PC-9 (cell line): ENCODE measurements at regions of chr15 and their contacts with region 1.

Region 1: DNA sequence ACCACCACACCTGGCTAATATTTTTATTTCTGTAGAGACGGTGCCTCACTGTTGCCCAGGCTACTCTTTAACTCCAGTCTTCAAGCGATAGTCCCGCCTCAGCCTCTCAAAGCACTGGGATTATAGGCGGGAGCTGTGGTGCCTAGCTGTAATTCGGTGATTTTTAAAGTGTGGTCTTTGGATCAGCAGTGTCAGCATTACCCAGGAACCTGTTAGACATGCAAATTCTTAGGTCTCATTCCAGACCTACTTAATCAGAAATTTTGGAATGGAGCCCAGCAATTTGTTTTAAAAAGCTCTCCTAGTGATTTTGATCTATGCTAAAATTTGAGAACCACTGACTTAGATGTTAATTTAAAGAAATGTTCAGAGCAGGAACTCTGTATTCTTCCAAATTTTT is 51.9 kb downstream of the GOLM2 start:
- DNase-seq: peak; percentile 65 to 71
- H3K4me3 ChIP-seq: no peak overlapping the region
- H3K27ac ChIP-seq: peak overlapping the region; percentile 19; the same call in 1 of the 2 replicates
- H3K4me1 ChIP-seq: peaks cover 8% of the 10 kb centered on the region; the same call in 1 of the 2 replicates
- H3K27me3 ChIP-seq: no peaks in the 10 kb centered on the region
- CTCF ChIP-seq: no peak

Region 2: GRCh38 chr15:44296625-44297524 is 43.5 kb before region 1 on chr15:
- CTCF ChIA-PET with region 1: interaction called, 5 read pairs
- POLR2A ChIA-PET with region 1: interaction called, 31 read pairs
- intact Hi-C with region 1: loop called (anchors 2 kb)
- DNase-seq: peak; percentile 57 to 82
- H3K4me3 ChIP-seq: peak overlapping the region; percentile 31; the same call in 1 of the 2 replicates
- H3K27ac ChIP-seq: peak overlapping the region; percentile 93
- H3K4me1 ChIP-seq: peaks cover 46% of the 10 kb centered on the region
- H3K27me3 ChIP-seq: no peaks in the 10 kb centered on the region
- CTCF ChIP-seq: no peak

Region 3: DNA sequence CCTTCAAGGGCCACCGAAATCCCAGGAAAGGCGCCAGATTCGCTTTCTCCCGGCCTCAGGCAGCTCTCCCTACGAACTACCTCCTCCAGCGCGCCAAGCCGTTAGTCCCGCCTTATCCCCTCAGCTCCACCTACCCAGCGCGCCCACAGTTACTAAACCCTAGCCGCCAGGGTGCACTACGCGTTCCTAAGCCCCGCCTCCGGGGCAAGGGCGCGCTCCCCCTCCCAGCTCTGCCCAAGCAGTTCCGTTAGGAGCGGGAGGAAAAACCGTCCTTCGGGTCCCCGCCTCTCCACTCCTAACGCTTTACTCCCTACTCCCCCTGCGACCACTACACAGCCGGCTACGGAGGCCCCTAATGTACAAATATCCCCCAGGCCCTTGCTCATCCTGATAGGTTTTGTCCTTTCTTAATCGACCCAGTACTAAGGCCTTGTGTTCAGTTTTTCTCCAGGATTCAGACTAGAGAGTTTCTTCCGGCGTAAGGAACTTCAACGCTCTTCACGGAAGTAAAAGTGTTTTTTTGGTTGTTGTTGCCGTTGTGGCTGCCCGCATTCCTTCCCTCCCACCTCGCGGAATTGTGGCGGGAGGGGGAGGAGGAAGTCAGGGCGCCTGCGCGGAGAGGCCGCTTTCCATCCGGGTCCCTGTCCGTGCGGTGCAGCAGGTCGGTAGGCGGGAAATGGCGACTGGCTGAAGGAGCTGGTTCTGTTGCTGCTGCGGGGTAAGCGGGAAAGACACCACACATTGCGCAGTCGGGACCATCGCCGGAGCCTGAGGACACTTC is 86.8 kb after region 1 on chr15 and contains the start of gene CTDSPL2:
- CTCF ChIA-PET with region 1: no interaction called
- POLR2A ChIA-PET with region 1: no interaction called
- intact Hi-C with region 1: loop called (anchors 2 kb)
- DNase-seq: peak; percentile 89 to 97
- H3K4me3 ChIP-seq: peak within 1 kb of the TSS; percentile 96
- H3K27ac ChIP-seq: peak within 1 kb of the TSS; percentile 95
- H3K4me1 ChIP-seq: peaks cover 13% of the 10 kb centered on the region; the same call in 1 of the 2 replicates
- H3K27me3 ChIP-seq: no peaks in the 10 kb centered on the region
- CTCF ChIP-seq: peak; percentile 35; the same call in 1 of the 2 replicates
- total RNA-seq, gene CTDSPL2: 31.5 and 55.0 TPM in 2 replicates